ENCODE measurements at regions of chr17 and their contacts with region 1.

Region 1: GRCh38 chr17:5237541-5238016 is 2.9 kb upstream of the SCIMP start:
- H3K4me3 ChIP-seq: no peak overlapping the region
- H3K27ac ChIP-seq: no peak overlapping the region
- H3K4me1 ChIP-seq: no peaks in the 10 kb centered on the region
- CTCF ChIP-seq: peak; percentile 31; the same call in 1 of the 2 replicates

Region 2: GRCh38 chr17:5226940-5227878 is 10.4 kb before region 1 on chr17:
- CTCF ChIA-PET with region 1: interaction called, 15 read pairs
- POLR2A ChIA-PET with region 1: no interaction called
- H3K4me3 ChIP-seq: no peak overlapping the region
- H3K27ac ChIP-seq: no peak overlapping the region
- H3K4me1 ChIP-seq: peaks cover 2% of the 10 kb centered on the region; the same call in 1 of the 2 replicates
- CTCF ChIP-seq: no peak

Region 3: GRCh38 chr17:5304636-5305035 is 67.1 kb after region 1 on chr17:
- CTCF ChIA-PET with region 1: no interaction called
- POLR2A ChIA-PET with region 1: no interaction called
- H3K4me3 ChIP-seq: no peak overlapping the region
- H3K27ac ChIP-seq: no peak overlapping the region
- H3K4me1 ChIP-seq: peaks cover 12% of the 10 kb centered on the region
- CTCF ChIP-seq: no peak